ENCODE measurements at regions of chr20 and their contacts with region 1.

Region 1: DNA sequence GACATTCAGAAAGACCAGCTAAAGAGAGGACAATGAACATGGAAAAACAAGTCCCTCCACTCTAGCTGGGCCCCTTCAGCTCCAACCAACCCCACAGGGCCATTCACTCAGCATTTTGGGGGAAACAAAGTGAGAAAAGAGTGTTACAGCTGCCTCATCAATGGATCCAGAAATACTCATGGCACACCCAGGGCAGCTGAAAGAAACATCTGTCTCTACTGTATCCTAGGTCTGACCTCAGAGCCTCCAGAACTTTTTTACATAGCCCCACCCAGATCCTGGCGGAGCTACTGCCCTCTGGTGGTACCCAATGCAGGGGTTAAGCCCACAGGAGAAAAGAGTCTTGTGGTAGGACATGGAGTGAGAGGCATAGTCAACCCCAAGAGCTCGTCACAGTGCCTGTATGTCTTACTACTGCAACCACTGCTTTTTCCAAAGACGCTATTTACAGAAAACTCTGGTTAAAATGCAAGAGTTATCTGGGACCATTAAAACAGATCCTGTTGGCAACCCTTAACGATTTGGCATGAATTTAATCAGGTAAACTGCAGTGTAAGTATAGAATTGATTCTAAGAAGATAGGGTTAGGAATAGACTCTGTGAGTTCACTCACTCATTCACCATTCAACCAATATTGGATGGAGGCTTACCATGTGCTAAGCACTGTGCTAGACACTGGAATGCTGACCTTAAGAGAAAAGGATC is 37.4 kb upstream of the FAM83C start:
- DNase-seq: peak; percentile 82
- ATAC-seq: peak; percentile 99
- H3K4me3 Mint-ChIP-seq: no peak overlapping the region
- H3K27ac Mint-ChIP-seq: 0 out of 2 replicates have a peak overlapping the region, but pooled peaks have one; percentile 40
- H3K4me1 Mint-ChIP-seq: peaks cover 11% of the 10 kb centered on the region; the same call in 1 of the 2 replicates
- H3K27me3 Mint-ChIP-seq: no peaks in the 10 kb centered on the region
- CTCF ChIP-seq: peak; percentile 58

Region 2: DNA sequence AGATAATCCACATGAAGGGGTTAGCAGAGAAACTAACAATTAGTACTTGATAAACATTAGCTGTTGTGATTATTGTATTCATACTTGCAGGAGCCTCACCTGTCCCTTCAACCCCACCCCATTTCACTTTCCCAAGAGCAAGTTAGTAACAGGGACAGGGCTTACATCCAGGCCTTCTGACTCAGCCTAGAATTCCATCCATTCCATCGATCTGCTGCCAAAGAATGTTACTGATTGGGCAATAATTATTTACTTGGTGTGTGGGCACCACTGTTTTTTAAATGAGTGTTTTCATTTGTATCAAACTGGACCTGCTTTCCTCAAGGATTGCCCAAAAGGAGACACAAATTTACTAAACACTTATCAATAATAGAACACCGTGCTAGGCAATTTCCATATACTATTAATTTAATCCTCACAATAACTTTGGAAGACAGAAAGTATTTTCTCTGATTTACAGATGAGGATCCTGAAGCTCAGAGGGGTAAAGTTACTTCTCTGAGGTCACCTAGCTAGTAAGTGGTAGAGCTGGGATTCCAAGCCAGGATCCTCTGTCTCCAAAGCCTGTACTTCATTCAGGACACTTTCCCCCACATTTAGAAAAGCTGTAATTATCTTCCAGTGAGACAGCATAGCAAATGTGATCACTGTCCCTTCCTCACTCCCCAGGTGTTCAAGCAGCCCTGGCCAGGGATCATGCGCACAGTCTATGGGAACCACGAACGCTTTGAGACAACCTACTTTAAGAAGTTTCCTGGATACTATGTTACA is 406.7 kb before region 1 on chr20:
- CTCF ChIA-PET with region 1: no interaction called
- POLR2A ChIA-PET with region 1: no interaction called
- DNase-seq: no peak
- ATAC-seq: no peak
- H3K4me3 Mint-ChIP-seq: no peak overlapping the region
- H3K27ac Mint-ChIP-seq: no peak overlapping the region
- H3K4me1 Mint-ChIP-seq: no peaks in the 10 kb centered on the region
- H3K27me3 Mint-ChIP-seq: no peaks in the 10 kb centered on the region
- CTCF ChIP-seq: no peak

Region 3: DNA sequence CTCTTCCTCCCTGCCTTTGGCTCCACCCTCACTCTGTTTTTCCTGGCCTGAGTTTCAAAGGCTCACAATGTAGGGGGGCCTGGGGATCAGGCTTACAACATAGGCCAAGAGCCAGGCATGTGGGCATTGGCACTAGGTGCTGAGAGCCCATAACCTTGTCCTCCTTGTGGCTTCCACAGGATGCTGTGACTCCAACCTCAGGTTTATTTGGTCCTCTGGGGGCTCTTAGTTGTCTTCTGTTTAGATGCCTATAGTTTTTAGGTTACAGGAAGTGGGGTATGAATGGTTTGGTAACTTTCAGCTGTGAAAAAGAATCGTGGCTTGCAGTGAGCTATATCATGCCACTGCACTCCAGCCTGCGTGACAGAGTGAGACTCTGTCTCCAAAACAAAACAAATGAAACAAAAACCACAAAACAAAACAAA is 77.5 kb before region 1 on chr20:
- CTCF ChIA-PET with region 1: no interaction called
- POLR2A ChIA-PET with region 1: no interaction called
- DNase-seq: no peak
- ATAC-seq: no peak
- H3K4me3 Mint-ChIP-seq: no peak overlapping the region
- H3K27ac Mint-ChIP-seq: no peak overlapping the region
- H3K4me1 Mint-ChIP-seq: peaks cover 33% of the 10 kb centered on the region
- H3K27me3 Mint-ChIP-seq: no peaks in the 10 kb centered on the region
- CTCF ChIP-seq: no peak

Region 4: GRCh38 chr20:35303735-35304491 is 25.7 kb before region 1 on chr20:
- CTCF ChIA-PET with region 1: interaction called, 102 read pairs
- POLR2A ChIA-PET with region 1: no interaction called
- DNase-seq: peak; percentile 94
- ATAC-seq: peak; percentile 84
- H3K4me3 Mint-ChIP-seq: peak overlapping the region; percentile 21; the same call in 1 of the 2 replicates
- H3K27ac Mint-ChIP-seq: no peak overlapping the region
- H3K4me1 Mint-ChIP-seq: peaks cover 14% of the 10 kb centered on the region
- H3K27me3 Mint-ChIP-seq: peaks cover under 1% of the 10 kb centered on the region; the same call in 1 of the 2 replicates
- CTCF ChIP-seq: peak; percentile 89

Region 5: GRCh38 chr20:35342154-35342769 is 12.7 kb after region 1 on chr20:
- CTCF ChIA-PET with region 1: interaction called, 31 read pairs
- POLR2A ChIA-PET with region 1: no interaction called
- DNase-seq: peak; percentile 18
- ATAC-seq: peak; percentile 94
- H3K4me3 Mint-ChIP-seq: no peak overlapping the region
- H3K27ac Mint-ChIP-seq: peak overlapping the region; percentile 57
- H3K4me1 Mint-ChIP-seq: peaks cover 5% of the 10 kb centered on the region; the same call in 1 of the 2 replicates
- H3K27me3 Mint-ChIP-seq: no peaks in the 10 kb centered on the region
- CTCF ChIP-seq: no peak

Region 6: DNA sequence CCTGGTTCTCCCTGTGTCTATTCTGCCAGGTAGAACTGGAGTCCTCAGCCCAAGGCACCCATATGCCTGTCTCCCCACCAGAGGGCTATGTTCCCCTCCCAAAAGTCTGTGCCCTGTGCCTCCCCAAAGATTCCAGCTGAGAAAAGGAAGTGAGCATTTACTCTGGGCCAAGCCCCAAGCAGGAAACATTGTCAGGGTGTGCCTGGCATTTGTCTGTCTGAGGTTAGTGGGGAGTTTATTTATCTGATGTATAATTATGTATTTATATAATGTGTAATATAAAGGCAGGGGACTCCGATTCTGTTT is 102.8 kb after region 1 on chr20:
- CTCF ChIA-PET with region 1: interaction called, 20 read pairs
- POLR2A ChIA-PET with region 1: no interaction called
- DNase-seq: no peak
- ATAC-seq: peak; percentile 60
- H3K4me3 Mint-ChIP-seq: no peak overlapping the region
- H3K27ac Mint-ChIP-seq: no peak overlapping the region; the same call in 1 of the 2 replicates
- H3K4me1 Mint-ChIP-seq: peaks cover 30% of the 10 kb centered on the region
- H3K27me3 Mint-ChIP-seq: no peaks in the 10 kb centered on the region; the same call in 1 of the 2 replicates
- CTCF ChIP-seq: no peak

Region 7: DNA sequence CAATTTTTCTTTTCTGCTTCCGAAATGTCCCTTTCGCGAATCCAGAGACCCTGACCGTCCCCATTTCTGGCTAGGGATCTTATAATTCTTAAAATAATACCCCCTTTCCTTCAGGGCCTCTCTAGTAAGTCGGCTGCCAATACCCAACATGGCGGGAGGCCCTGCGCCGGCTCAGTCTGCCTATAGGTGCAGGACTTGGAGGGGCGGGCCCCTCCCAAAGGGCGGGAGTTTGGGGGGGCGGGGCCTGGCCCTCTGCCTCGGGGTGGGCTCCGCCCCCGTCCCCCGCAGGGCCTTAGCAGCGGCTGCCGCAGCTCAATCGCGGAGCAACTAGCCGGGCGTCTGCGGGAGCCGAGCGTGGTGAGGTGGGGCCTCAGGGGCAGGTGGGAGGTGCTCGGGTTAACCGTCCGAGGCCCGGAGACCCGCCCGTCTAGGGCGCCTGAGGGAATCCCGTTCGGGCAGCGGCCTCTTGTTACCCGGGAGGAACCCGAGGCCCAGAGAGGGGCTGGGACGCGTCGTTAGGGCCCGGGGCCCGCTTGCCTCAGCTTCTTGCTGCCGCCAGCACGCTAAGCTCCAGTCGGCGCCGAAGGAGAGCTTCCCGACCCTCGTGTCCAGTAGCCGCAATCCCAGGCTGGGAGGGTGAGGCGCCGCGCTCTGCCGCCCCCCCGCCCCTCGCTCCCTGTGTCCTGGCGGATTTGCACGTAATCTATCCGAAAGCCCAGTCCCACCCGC is 125.5 kb after region 1 on chr20 and contains the start of gene CEP250:
- CTCF ChIA-PET with region 1: interaction called, 13 read pairs
- POLR2A ChIA-PET with region 1: no interaction called
- DNase-seq: peak; percentile 97
- ATAC-seq: peak; percentile 92
- H3K4me3 Mint-ChIP-seq: peak within 1 kb of the TSS; percentile 90
- H3K27ac Mint-ChIP-seq: peak within 1 kb of the TSS; percentile 99
- H3K4me1 Mint-ChIP-seq: peaks cover 32% of the 10 kb centered on the region
- H3K27me3 Mint-ChIP-seq: no peaks in the 10 kb centered on the region
- CTCF ChIP-seq: no peak
- total RNA-seq, gene CEP250: 63.1 to 66.9 TPM (median 65.8 TPM) in 3 replicates

Region 8: GRCh38 chr20:35497780-35498189 is 168.2 kb after region 1 on chr20:
- CTCF ChIA-PET with region 1: no interaction called
- POLR2A ChIA-PET with region 1: no interaction called
- DNase-seq: no peak
- ATAC-seq: no peak
- H3K4me3 Mint-ChIP-seq: no peak overlapping the region
- H3K27ac Mint-ChIP-seq: no peak overlapping the region; the same call in 1 of the 2 replicates
- H3K4me1 Mint-ChIP-seq: no peaks in the 10 kb centered on the region
- H3K27me3 Mint-ChIP-seq: no peaks in the 10 kb centered on the region
- CTCF ChIP-seq: no peak